ENCODE measurements at regions of chr1 and their contacts with region 1.

Region 1: DNA sequence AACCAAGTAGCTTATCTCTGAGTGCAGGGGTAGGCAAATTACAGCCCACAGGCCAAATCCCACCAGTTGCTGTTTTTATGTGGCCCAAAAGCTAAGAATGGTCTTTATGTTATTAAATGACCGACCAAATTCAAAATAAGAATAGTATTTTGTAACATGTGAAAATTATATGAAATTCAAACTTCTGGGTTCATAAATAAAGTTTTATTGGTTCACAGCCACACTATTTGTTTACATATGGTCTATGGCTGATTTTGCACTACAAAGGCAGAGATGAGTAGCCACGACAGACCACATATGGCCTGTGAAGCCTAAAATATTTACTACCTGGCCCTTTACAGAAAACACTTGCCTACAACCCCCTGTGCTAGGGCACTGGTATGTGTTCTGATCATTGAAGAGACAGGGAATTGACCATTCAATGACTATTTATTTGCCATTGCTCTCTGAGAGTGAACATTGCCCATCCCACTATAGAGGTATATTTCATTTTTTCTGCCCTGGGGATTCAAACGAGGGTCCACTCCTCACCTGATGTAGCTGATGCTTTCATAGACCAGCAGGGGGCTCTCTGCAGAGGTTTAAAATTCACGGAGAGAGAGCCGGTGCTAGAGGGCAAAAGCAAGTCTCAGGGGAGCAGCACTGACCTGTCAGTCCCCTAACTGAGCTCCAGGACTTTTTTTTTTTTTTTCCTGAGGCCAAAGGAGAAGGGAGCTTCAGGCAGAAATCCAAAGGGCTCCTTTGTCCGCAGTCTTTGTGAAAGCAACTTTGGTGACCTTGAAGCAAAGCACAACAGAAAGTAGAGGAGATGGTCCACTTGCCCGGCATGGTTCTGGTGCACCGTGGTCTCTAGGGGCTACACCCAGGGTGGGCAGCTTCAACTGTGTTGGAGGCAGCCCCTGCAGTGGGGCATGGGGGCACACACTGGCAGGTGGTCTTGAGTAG is 7.3 kb upstream of the GNL2 start:
- DNase-seq: peak in 1 of 10 donors; percentile 5
- H3K4me3 ChIP-seq: peak overlapping the region in 1 of 59 donors; percentile 15
- H3K27ac ChIP-seq: no peak overlapping the region
- H3K27me3 ChIP-seq: peaks cover 0 to 4% (median 0%) of the 10 kb centered on the region in 45 donors
- CTCF ChIP-seq: peak; percentile 18 to 72 (median 59)

Region 2: GRCh38 chr1:37676281-37677243 is 73.5 kb after region 1 on chr1:
- intact Hi-C with region 1: loop called (anchors 5 kb)
- DNase-seq: no peak
- H3K4me3 ChIP-seq: no peak overlapping the region
- H3K27ac ChIP-seq: peak overlapping the region in 42 of 59 donors; percentile 1 to 78 (median 48)
- H3K27me3 ChIP-seq: peaks cover 0 to 11% (median 0%) of the 10 kb centered on the region in 45 donors
- CTCF ChIP-seq: peak in 1 of 56 donors; percentile 7

Region 3: DNA sequence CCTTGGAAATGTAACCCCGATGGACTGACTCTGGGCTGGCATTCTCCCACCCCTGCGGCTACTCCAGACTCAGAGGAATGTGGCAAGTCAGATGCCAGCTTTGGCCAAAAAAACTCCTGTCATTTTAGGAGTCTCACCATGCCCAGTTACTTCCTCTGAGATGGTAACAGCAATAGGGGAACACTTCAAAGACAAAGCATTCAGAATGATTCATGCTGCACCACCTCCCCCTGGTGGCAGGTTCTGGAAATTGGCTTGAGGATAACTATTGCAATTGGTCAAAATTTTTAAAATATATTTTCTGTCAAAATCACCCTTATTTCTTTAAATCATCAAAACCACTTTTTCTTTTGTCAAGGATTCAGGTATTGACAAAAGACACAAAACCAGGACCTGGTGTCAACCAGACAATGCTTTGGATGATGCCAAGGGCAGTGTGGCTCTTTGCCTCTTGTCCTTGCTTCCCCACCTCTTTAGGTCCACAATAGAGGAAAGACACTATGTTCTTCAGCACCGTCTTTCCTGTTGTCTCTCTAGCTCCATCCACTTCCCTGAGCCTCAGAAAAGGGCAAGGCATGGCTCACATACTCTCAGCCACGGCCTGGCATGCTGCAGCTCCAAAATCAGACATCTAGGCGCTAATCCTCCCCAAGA is 79.4 kb after region 1 on chr1:
- intact Hi-C with region 1: loop called (anchors 5 kb)
- DNase-seq: peak in 9 of 10 donors; percentile 60 to 93 (median 75)
- H3K4me3 ChIP-seq: no peak overlapping the region
- H3K27ac ChIP-seq: peak overlapping the region in 2 of 59 donors; percentile 38 to 62
- H3K27me3 ChIP-seq: no peaks in the 10 kb centered on the region
- CTCF ChIP-seq: peak; percentile 85 to 99 (median 93)

Measured in dorsolateral prefrontal cortex (tissue), 120 donors.